Right cardiac atrium (tissue), 5 donors: ENCODE measurements at regions of chr10 and their contacts with region 1.

Region 1: GRCh38 chr10:80509403-80510161 is 28.1 kb upstream of the SH2D4B start:
- DNase-seq: peak in 2 of 3 donors; percentile 61 to 62
- ATAC-seq: peak; percentile 50 to 85
- H3K4me3 ChIP-seq: no peak overlapping the region
- H3K27ac ChIP-seq: peak overlapping the region; percentile 67
- H3K4me1 ChIP-seq: peaks cover 12% of the 10 kb centered on the region
- H3K27me3 ChIP-seq: no peaks in the 10 kb centered on the region

Region 2: GRCh38 chr10:80382989-80383388 is 126.6 kb before region 1 on chr10:
- intact Hi-C with region 1: loop called (anchors 5 to 10 kb)
- DNase-seq: peak in 1 of 3 donors; percentile 52
- ATAC-seq: no peak
- H3K4me3 ChIP-seq: no peak overlapping the region
- H3K27ac ChIP-seq: no peak overlapping the region
- H3K4me1 ChIP-seq: no peaks in the 10 kb centered on the region
- H3K27me3 ChIP-seq: no peaks in the 10 kb centered on the region

Region 3: DNA sequence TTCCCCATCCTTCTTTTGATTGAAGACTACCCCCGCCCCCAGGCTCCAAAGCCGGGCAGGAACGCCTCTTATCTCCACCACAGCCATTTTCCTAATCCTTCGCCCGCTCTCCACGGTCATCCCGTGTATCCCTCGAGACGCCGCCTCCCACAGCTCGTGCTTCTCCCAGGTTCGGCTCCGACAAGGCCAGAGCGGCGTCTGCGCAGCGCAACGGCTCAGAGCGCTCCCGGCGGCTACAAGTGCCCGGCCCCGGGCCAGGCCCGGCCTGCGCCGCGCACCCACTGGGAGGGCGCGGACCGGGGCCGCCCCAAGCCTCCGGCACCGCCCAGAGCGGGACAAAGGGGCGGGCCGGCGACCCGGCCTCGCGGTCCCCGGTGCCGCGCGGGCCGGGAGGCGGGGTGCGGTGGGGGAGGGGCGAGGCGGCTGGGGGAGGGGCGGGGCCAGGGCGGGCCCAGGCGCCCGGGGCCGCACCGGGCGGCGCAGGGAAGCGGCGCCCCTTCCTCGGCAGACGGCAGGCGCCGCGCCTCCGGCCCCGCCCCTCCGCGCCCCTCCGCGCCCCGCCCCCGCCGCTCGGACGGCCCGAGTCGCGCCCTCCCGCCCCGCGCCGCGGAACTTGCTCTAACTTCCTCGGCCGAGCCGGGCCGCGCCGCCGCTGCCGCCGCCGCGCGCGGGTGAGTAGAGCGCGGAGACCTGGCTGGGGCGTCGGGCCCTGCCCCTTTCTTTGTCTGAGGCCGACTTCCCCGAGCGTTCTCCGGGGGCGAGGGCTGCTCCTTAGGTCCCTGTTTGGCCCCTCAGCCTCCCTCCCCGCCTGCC is 55.7 kb before region 1 on chr10 and contains the start of gene TSPAN14:
- intact Hi-C with region 1: loop called (anchors 2 to 5 kb)
- DNase-seq: peak; percentile 91 to 95 (median 94)
- ATAC-seq: peak; percentile 94
- H3K4me3 ChIP-seq: peak within 1 kb of the TSS; percentile 57
- H3K27ac ChIP-seq: peak within 1 kb of the TSS; percentile 96
- H3K4me1 ChIP-seq: peaks cover 11% of the 10 kb centered on the region
- H3K27me3 ChIP-seq: no peaks in the 10 kb centered on the region
- total RNA-seq, gene TSPAN14: 24.4 to 44.1 (median 34.1) TPM

Region 4: DNA sequence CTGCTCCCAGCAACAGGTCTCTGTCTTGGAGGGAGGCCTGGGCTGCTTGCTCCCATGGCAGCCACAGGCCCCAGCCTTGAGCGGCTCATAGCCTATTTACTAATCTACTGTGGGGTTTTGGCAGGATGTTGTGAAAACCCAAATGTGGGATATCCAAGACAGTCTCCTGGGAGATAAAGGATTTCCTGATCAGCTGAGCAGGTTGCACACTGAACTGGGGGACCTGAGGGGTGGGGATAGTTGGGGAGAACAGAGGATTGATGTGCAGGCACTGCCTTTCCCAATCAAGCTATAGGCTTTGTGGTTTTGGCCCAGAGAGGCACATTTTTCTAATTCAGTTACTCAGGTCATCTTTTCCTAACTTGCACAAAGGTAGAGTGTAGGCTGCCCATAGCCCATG is 120.7 kb after region 1 on chr10:
- intact Hi-C with region 1: no loop called
- DNase-seq: no peak
- ATAC-seq: no peak
- H3K4me3 ChIP-seq: no peak overlapping the region
- H3K27ac ChIP-seq: no peak overlapping the region
- H3K4me1 ChIP-seq: no peaks in the 10 kb centered on the region
- H3K27me3 ChIP-seq: no peaks in the 10 kb centered on the region

Region 5: DNA sequence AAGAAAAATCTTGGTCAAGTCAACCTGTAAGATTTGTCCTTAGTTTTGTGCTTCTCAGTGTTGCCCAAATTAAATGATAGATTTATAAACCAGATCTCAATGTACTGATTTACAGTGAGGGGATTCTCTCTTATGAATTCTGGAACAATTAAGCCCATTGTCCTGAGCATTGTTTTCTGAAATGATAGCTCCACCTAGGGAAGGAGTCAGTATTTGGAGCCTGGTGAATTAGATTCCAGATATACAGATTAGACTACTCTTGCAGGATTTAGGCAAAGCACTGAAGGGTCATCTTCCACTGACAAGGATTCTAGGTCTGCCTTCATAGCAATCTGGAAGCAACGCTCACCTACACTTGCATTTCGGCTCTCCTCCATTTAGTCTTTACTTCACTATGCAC is 381.7 kb after region 1 on chr10:
- intact Hi-C with region 1: no loop called
- DNase-seq: no peak
- ATAC-seq: no peak
- H3K4me3 ChIP-seq: no peak overlapping the region
- H3K27ac ChIP-seq: no peak overlapping the region
- H3K4me1 ChIP-seq: no peaks in the 10 kb centered on the region
- H3K27me3 ChIP-seq: no peaks in the 10 kb centered on the region